A673 (cell line): ENCODE measurements at regions of chr7 and their contacts with region 1.

Region 1: DNA sequence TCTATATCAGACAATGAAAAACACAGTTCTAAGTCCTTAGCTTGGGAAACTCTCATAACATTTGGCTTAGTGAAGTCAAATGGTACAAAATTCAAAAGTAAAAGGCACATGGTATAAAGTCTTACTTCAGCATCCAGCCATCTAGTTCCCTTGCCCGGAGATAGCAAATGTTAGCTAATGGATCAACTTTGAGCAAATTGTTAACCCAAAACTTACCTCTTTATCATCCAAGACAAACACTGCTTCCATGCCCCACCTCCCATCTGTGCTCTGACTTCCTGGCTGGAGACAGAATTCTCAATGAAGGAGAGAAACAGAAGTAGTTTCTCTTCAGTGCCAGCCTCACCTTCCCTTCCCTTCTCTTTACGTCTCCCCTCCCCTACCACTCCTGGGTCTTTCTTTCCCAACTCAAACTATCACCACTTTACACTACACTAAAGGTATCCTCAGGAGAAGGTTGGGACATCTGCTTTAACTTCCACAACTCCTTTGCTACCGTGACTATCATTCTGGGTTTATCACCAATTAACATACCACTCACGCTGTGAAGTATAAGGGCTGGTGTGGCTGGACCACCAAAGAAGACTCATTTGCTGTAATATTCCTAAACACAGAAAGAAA is 21.2 kb upstream of the ZNRF2 start:
- DNase-seq: no peak
- H3K4me3 ChIP-seq: no peak overlapping the region
- H3K27ac ChIP-seq: no peak overlapping the region
- H3K4me1 ChIP-seq: no peaks in the 10 kb centered on the region
- H3K27me3 ChIP-seq: no peaks in the 10 kb centered on the region
- CTCF ChIP-seq: no peak

Region 2: DNA sequence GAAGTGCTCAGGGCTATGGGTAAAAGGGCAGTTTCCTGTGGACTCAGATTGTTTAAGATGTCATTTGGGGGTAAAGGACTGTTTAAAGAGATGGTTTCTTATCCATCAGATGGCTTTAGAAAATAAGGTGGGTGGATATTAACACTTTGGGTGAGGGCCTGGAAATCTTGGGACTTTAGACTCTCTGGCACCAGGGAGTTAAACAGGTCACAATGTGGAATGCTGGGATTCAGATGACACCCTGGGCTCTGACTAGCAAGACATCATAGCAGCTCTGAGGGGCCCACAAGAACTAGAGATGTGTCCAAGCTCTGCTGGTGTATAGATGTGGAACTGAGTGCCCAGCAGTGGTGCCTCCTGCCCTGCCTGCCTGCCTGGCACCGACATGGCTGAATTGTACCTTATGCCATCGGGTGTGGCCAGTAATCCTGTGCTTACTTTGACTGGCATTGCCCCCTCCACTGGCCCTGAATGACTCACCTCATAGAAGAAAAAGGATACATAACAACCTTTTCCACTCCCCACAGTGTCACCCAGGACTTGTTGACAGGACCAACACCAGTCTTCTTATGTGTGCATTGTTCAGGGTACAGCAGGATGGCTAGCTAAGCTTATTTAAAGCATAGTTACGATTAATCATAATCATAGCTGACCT is 799.6 kb before region 1 on chr7:
- CTCF ChIA-PET with region 1: no interaction called
- POLR2A ChIA-PET with region 1: no interaction called
- intact Hi-C with region 1: no loop called
- DNase-seq: no peak
- H3K4me3 ChIP-seq: no peak overlapping the region
- H3K27ac ChIP-seq: no peak overlapping the region
- H3K4me1 ChIP-seq: no peaks in the 10 kb centered on the region
- H3K27me3 ChIP-seq: no peaks in the 10 kb centered on the region
- CTCF ChIP-seq: no peak

Region 3: GRCh38 chr7:30114536-30115238 is 148.5 kb before region 1 on chr7:
- CTCF ChIA-PET with region 1: no interaction called
- POLR2A ChIA-PET with region 1: no interaction called
- intact Hi-C with region 1: no loop called
- DNase-seq: no peak
- H3K4me3 ChIP-seq: no peak overlapping the region
- H3K27ac ChIP-seq: no peak overlapping the region
- H3K4me1 ChIP-seq: peaks cover 14% of the 10 kb centered on the region
- H3K27me3 ChIP-seq: no peaks in the 10 kb centered on the region
- CTCF ChIP-seq: no peak

Region 4: GRCh38 chr7:30206491-30206890 is 56.7 kb before region 1 on chr7:
- CTCF ChIA-PET with region 1: no interaction called
- POLR2A ChIA-PET with region 1: no interaction called
- intact Hi-C with region 1: no loop called
- DNase-seq: peak; percentile 10
- H3K4me3 ChIP-seq: no peak overlapping the region
- H3K27ac ChIP-seq: no peak overlapping the region
- H3K4me1 ChIP-seq: no peaks in the 10 kb centered on the region
- H3K27me3 ChIP-seq: no peaks in the 10 kb centered on the region
- CTCF ChIP-seq: no peak

Region 5: GRCh38 chr7:30585675-30586074 is 322.5 kb after region 1 on chr7:
- CTCF ChIA-PET with region 1: no interaction called
- POLR2A ChIA-PET with region 1: interaction called, 14 read pairs
- intact Hi-C with region 1: no loop called
- DNase-seq: no peak
- H3K4me3 ChIP-seq: no peak overlapping the region
- H3K27ac ChIP-seq: no peak overlapping the region
- H3K4me1 ChIP-seq: no peaks in the 10 kb centered on the region
- H3K27me3 ChIP-seq: no peaks in the 10 kb centered on the region
- CTCF ChIP-seq: no peak